ENCODE measurements at regions of chrX and their contacts with region 1.

Region 1: GRCh38 chrX:40169193-40170101 is 71.7 kb upstream of the BCOR start:
- DNase-seq: peak; percentile 92
- H3K4me3 Mint-ChIP-seq: peak overlapping the region; percentile 91
- H3K27ac Mint-ChIP-seq: peak overlapping the region; percentile 99
- H3K4me1 Mint-ChIP-seq: peaks cover 42% of the 10 kb centered on the region
- H3K27me3 Mint-ChIP-seq: no peaks in the 10 kb centered on the region

Region 2: GRCh38 chrX:39261446-39262147 is 907.9 kb before region 1 on chrX:
- CTCF ChIA-PET with region 1: no interaction called
- intact Hi-C with region 1: loop called (anchors 10 kb)
- DNase-seq: peak; percentile 40
- H3K4me3 Mint-ChIP-seq: no peak overlapping the region
- H3K27ac Mint-ChIP-seq: peak overlapping the region; percentile 78
- H3K4me1 Mint-ChIP-seq: peaks cover 49% of the 10 kb centered on the region
- H3K27me3 Mint-ChIP-seq: no peaks in the 10 kb centered on the region

Region 3: GRCh38 chrX:39814391-39814790 is 355.1 kb before region 1 on chrX:
- CTCF ChIA-PET with region 1: interaction called, 7 read pairs
- intact Hi-C with region 1: loop called (anchors 1 kb)
- DNase-seq: peak; percentile 58
- H3K4me3 Mint-ChIP-seq: no peak overlapping the region
- H3K27ac Mint-ChIP-seq: no peak overlapping the region
- H3K4me1 Mint-ChIP-seq: peaks cover 30% of the 10 kb centered on the region
- H3K27me3 Mint-ChIP-seq: no peaks in the 10 kb centered on the region

Region 4: DNA sequence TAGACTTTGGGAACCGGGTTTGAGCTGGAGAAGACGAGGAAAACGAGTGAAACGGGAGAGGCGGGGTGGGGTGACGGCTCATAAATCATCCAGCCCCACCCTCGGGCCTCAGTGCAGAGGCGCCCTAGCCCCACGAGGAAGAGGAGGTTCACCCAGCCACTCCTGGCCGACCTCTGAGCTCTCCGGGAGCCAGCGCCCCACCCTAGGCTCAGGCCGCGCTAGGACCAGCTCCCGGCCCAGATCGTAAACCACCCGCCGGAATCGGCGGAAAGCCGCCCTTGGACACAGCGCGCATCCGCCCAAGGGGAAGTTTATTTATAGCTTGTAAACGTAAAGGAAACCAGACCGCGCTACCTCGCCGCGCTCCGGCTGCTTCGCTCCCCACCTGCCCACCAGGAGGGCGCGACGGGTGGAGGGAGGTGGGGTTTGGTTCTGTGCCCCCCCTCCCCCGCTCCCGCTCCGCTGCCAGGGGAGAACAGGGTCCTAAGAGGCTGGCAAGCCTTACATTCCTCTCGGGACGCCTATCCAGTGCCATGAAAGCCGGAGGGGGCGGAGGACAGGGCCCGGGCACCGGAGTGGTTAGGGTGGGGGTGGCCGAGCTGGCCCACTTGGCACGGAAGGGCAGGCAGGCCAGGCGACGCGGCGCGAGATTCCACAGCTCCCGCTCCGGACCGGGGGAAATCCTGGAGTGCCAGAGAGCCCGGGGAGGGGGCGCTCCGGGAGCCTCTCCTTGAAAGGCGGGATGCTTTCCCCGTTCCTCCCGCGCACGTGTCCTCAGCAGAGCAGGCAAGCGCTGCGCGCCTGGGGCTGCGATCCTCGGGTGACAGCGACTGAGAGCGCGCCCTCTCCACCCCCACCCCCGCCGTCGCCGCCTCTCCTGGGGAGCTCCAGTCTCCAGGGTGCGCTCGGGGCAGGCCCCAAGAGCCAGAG is 155.9 kb before region 1 on chrX:
- CTCF ChIA-PET with region 1: no interaction called
- intact Hi-C with region 1: loop called (anchors 2 kb)
- DNase-seq: peak; percentile 55
- H3K4me3 Mint-ChIP-seq: peak overlapping the region; percentile 69
- H3K27ac Mint-ChIP-seq: peak overlapping the region; percentile 63
- H3K4me1 Mint-ChIP-seq: peaks cover 26% of the 10 kb centered on the region
- H3K27me3 Mint-ChIP-seq: peaks cover 24% of the 10 kb centered on the region

Region 5: GRCh38 chrX:40153335-40154249 is 15.9 kb before region 1 on chrX:
- CTCF ChIA-PET with region 1: interaction called, 6 read pairs
- intact Hi-C with region 1: loop called (anchors 1 kb)
- DNase-seq: peak; percentile 91
- H3K4me3 Mint-ChIP-seq: peak overlapping the region; percentile 72
- H3K27ac Mint-ChIP-seq: peak overlapping the region; percentile 53
- H3K4me1 Mint-ChIP-seq: peaks cover 10% of the 10 kb centered on the region
- H3K27me3 Mint-ChIP-seq: no peaks in the 10 kb centered on the region

Region 6: GRCh38 chrX:40735325-40736169 is 566.1 kb after region 1 on chrX and contains the start of gene MED14:
- CTCF ChIA-PET with region 1: no interaction called
- intact Hi-C with region 1: loop called (anchors 10 kb)
- DNase-seq: peak; percentile 90
- H3K4me3 Mint-ChIP-seq: peak within 1 kb of the TSS; percentile 85
- H3K27ac Mint-ChIP-seq: peak within 1 kb of the TSS; percentile 97
- H3K4me1 Mint-ChIP-seq: peaks cover 43% of the 10 kb centered on the region
- H3K27me3 Mint-ChIP-seq: no peaks in the 10 kb centered on the region
- total RNA-seq, gene MED14: 47.3 to 50.8 TPM

Measured in activated naive CD4-positive, alpha-beta T cell treated with anti-CD3 and anti-CD28 coated beads for 36 hours (primary cell).